PC-9 (cell line): ENCODE measurements at regions of chr3 and their contacts with region 1.

Region 1: DNA sequence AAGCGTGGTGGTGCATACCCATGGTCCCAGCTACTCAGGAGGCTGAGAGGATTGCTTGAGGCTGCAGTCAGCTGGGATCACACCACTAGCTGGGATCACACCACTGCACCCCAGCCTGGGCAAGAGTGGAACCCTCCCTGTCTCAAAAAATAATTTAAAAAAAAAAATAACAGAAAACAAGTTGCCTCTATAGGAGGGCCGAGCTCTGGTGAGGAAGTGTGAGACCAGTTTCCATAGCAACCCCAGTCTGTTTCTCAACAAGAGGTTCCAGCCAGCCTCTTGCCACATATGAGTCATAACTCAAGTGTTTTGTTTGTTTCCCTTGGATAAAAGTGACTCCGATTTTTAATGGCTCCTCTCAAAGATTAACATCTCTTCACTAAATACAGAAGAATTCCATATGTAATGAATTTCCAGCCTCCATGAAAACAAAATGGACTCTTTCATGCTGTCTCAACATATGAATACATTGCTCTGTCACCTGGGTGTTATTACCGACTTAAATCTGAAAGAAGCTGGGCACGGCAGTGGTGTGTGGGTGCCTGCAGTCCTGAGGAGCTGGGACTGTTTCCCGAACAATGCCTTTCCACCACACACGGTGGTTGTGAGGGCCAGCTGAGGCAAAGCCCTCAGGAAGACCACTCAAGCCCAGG is 19.7 kb downstream of the TMEM43 start:
- DNase-seq: peak; percentile 74 to 96
- H3K4me3 ChIP-seq: peak overlapping the region; percentile 51
- H3K27ac ChIP-seq: peak overlapping the region; percentile 88
- H3K4me1 ChIP-seq: peaks cover 44% of the 10 kb centered on the region
- H3K27me3 ChIP-seq: no peaks in the 10 kb centered on the region
- CTCF ChIP-seq: no peak

Region 2: GRCh38 chr3:13470894-13471574 is 673.5 kb before region 1 on chr3:
- CTCF ChIA-PET with region 1: no interaction called
- POLR2A ChIA-PET with region 1: interaction called, 11 read pairs
- intact Hi-C with region 1: no loop called
- DNase-seq: no peak
- H3K4me3 ChIP-seq: no peak overlapping the region
- H3K27ac ChIP-seq: no peak overlapping the region
- H3K4me1 ChIP-seq: peaks cover 16% of the 10 kb centered on the region
- H3K27me3 ChIP-seq: no peaks in the 10 kb centered on the region
- CTCF ChIP-seq: no peak

Region 3: DNA sequence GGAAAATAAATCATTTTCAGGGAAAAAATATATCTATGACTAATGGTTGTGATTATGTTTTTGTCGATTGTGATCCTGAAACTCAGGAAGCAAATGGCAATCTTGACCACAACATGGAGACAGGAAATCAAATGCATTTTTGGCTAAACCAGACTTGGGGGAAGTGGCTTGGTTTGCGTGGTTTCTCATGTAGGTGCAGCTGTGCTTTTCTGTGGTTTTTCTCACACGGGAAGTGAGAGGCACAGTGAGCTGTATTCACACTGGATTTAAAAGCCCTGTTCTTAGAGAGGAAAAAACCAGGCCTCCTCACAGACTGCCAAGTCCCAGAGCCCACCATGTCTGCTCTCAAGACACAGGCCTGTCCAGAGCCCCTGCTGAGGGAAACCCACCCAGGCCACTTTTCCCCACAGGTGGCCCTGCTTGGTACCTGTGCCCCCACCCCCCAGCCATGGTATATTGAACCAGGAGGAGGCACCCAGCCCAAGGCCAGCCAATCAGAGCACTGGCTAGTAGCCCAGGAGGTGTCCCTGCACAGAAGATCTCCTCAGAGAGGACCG is 1503.1 kb after region 1 on chr3:
- CTCF ChIA-PET with region 1: no interaction called
- POLR2A ChIA-PET with region 1: interaction called, 12 read pairs
- intact Hi-C with region 1: no loop called
- DNase-seq: peak; percentile 25 to 64
- H3K4me3 ChIP-seq: no peak overlapping the region; the same call in 1 of the 2 replicates
- H3K27ac ChIP-seq: peak overlapping the region; percentile 82
- H3K4me1 ChIP-seq: peaks cover 40% of the 10 kb centered on the region
- H3K27me3 ChIP-seq: no peaks in the 10 kb centered on the region
- CTCF ChIP-seq: no peak